Esophagus muscularis mucosa (tissue), 4 donors: ENCODE measurements at regions of chr19 and their contacts with region 1.

Region 1: GRCh38 chr19:47436712-47437401 is 17.5 kb upstream of the MEIS3 start:
- DNase-seq: peak; percentile 94
- H3K4me3 ChIP-seq: no peak overlapping the region
- H3K27ac ChIP-seq: no peak overlapping the region
- H3K4me1 ChIP-seq: peaks cover 0 to 10% (median 6%) of the 10 kb centered on the region in 4 donors
- H3K27me3 ChIP-seq: peaks cover 0 to 54% (median 0%) of the 10 kb centered on the region in 4 donors
- CTCF ChIP-seq: peak; percentile 84 to 94 (median 89)
- EP300 ChIP-seq: no peak
- POLR2A ChIP-seq: no peak

Region 2: DNA sequence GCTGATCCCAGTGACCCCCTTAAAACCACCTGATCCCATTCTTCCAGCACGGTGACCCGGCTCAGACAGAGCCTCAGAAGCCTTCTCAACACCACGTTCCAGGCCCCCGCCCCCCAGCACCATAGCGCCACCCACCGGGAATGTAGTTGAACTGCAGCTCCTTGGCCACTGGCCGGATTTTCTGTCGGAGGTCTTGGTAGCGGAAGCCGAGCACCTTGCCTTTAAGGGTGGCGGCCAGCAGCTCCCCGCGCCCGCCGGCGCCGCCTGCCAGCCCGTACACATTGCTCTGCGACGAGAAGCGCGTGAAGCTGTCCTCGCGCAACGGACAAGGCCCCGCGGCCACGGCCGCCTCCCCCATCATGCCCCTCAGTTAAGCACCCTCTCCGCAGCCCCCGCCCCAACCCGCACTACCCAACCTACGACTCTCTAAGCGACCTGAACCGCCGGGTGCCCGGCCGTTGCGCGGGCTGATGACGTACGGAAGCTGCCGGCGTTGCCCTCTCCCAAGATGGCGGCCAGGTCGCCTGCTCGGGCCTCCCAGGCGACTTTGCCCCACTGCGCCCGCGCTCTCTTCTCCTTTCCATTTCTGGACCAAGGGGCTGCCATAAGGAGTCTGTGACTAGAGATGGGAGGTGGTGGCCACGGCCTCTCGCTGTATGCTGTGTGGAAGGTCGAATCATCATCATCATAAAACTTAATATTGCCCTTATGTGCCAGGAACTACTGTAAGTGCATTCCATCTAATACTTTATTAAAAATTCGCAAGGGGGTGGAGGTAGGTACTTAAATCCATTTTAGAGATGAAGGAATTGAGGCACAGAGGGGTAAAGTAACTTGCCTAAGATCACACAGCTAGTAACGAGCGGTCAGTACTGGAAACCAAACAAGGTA is 47.2 kb after region 1 on chr19 and contains the start of gene KPTN:
- intact Hi-C with region 1: loop called (anchors 5 kb)
- DNase-seq: peak; percentile 95
- H3K4me3 ChIP-seq: peak within 1 kb of the TSS; percentile 62 to 88 (median 66)
- H3K27ac ChIP-seq: peak within 1 kb of the TSS; percentile 85 to 90 (median 89)
- H3K4me1 ChIP-seq: peaks cover 12 to 29% (median 25%) of the 10 kb centered on the region in 4 donors
- H3K27me3 ChIP-seq: peaks cover 0 to 11% (median 0%) of the 10 kb centered on the region in 4 donors
- CTCF ChIP-seq: peak; percentile 77 to 97 (median 93)
- EP300 ChIP-seq: no peak
- POLR2A ChIP-seq: no peak
- total RNA-seq, gene KPTN: 2.3 to 9.4 (median 5.2) TPM

Region 3: DNA sequence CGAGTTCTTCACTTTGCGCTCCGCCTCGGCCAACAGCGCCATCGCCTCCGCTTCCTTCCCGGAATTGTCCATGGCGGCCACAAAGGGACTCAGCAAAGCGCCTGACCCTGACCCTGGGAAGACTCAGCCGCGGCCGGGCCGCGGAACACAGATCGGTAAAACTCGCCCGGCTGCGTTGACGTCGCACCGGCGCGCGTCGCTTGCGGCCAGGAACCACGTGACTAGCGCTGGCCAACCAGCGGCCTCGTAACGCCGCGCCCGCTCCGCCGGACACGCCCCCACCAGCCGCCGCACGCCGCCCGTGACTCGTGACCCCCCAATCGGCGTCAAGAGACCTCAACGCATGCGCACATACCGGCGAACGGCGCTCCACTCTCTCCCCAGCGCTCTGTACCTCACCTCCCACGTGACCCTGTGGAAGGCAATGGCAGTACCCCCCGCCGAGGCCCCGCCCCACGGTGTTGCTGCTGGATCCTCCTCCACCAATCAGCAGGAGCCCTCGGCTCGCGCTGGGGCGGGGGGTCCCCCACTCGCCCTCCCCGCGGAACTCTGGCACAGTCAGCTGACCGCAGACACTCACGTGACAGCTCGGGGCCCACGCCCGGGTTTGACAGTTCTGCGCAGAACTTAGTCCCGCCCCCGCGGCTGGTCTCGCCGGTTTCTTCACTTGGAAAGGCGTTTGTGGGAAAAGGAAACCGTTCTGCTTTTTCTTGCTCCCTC is 78.2 kb after region 1 on chr19 and contains the start of gene NAPA:
- intact Hi-C with region 1: loop called (anchors 2 kb)
- DNase-seq: peak; percentile 100
- H3K4me3 ChIP-seq: peak within 1 kb of the TSS; percentile 70 to 99 (median 94)
- H3K27ac ChIP-seq: peak within 1 kb of the TSS; percentile 94 to 99 (median 98)
- H3K4me1 ChIP-seq: peaks cover 38 to 52% (median 51%) of the 10 kb centered on the region in 4 donors
- H3K27me3 ChIP-seq: no peaks in the 10 kb centered on the region
- CTCF ChIP-seq: no peak
- EP300 ChIP-seq: no peak
- POLR2A ChIP-seq: peak; percentile 97
- total RNA-seq, gene NAPA: 109 to 164 (median 148) TPM

Region 4: GRCh38 chr19:47598407-47599349 is 161.8 kb after region 1 on chr19:
- intact Hi-C with region 1: loop called (anchors 10 kb)
- DNase-seq: peak; percentile 95
- H3K4me3 ChIP-seq: peak overlapping the region; percentile 57 to 71 (median 61)
- H3K27ac ChIP-seq: peak overlapping the region; percentile 87 to 88 (median 88)
- H3K4me1 ChIP-seq: peaks cover 17 to 29% (median 27%) of the 10 kb centered on the region in 4 donors
- H3K27me3 ChIP-seq: no peaks in the 10 kb centered on the region
- CTCF ChIP-seq: no peak
- EP300 ChIP-seq: no peak
- POLR2A ChIP-seq: no peak

Region 5: GRCh38 chr19:47697863-47698609 is 261.2 kb after region 1 on chr19:
- intact Hi-C with region 1: loop called (anchors 1 kb)
- DNase-seq: no peak
- H3K4me3 ChIP-seq: no peak overlapping the region
- H3K27ac ChIP-seq: peak overlapping the region; percentile 72 to 82 (median 80)
- H3K4me1 ChIP-seq: peaks cover 6 to 21% (median 14%) of the 10 kb centered on the region in 4 donors
- H3K27me3 ChIP-seq: no peaks in the 10 kb centered on the region
- CTCF ChIP-seq: peak in 2 of 3 experiments; percentile 97 to 98
- EP300 ChIP-seq: no peak
- POLR2A ChIP-seq: no peak

Region 6: GRCh38 chr19:47779524-47780214 is 342.8 kb after region 1 on chr19:
- intact Hi-C with region 1: loop called (anchors 10 kb)
- DNase-seq: no peak
- H3K4me3 ChIP-seq: peak overlapping the region; percentile 80 to 94 (median 90)
- H3K27ac ChIP-seq: peak overlapping the region; percentile 97 to 100 (median 98)
- H3K4me1 ChIP-seq: peaks cover 42 to 69% (median 59%) of the 10 kb centered on the region in 4 donors
- H3K27me3 ChIP-seq: no peaks in the 10 kb centered on the region
- CTCF ChIP-seq: no peak
- EP300 ChIP-seq: no peak
- POLR2A ChIP-seq: no peak